Endothelial cell of umbilical vein (primary cell): ENCODE measurements at regions of chr16 and their contacts with region 1.

Region 1: DNA sequence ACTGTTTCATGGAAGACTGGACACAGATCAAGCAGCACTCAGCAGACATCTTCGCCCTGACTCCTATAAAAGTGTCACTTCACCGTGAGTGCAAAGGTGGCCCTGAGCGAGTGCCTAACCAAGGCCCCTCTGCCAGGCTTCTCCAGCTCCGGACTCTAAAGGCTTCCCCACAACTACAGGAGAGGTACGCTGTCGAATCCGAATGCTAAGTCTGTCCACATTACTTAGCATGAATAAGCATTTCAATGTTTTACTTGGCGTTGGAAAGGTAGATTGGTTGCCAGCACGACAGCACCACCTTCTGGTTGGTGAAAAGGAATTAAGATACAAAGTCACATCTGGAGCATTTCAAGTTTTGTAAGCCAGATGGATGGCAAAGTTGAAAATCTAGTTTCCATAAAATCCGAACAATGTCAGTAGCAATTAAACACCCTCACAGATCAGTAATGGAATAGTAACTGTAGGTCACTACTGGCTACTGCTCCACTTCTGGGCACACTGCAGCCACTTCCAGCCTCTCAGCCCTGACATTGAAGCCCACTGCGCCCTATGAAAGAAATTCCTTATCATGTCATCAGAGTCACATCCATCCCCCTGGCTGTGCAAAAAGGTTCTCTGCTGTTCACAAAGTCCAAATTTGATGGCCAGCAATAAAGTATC is 100.9 kb downstream of the PARN start:
- DNase-seq: peak; percentile 89
- H3K4me3 ChIP-seq: no peak overlapping the region
- H3K27ac ChIP-seq: no peak overlapping the region
- H3K4me1 ChIP-seq: peaks cover 3% of the 10 kb centered on the region
- H3K27me3 ChIP-seq: no peaks in the 10 kb centered on the region
- CTCF ChIP-seq: peak; percentile 56 to 71
- POLR2A ChIP-seq: no peak

Region 2: GRCh38 chr16:14300705-14301168 is 228.4 kb before region 1 on chr16:
- CTCF ChIA-PET with region 1: interaction called, 33 read pairs
- POLR2A ChIA-PET with region 1: no interaction called
- dilution Hi-C with region 1: no loop called
- intact Hi-C with region 1: loop called (anchors 1 kb)
- DNase-seq: peak; percentile 78
- H3K4me3 ChIP-seq: no peak overlapping the region
- H3K27ac ChIP-seq: no peak overlapping the region
- H3K4me1 ChIP-seq: peaks cover 10% of the 10 kb centered on the region
- H3K27me3 ChIP-seq: no peaks in the 10 kb centered on the region
- CTCF ChIP-seq: peak; percentile 43 to 70
- POLR2A ChIP-seq: no peak

Region 3: GRCh38 chr16:14399378-14400284 is 129.5 kb before region 1 on chr16:
- CTCF ChIA-PET with region 1: no interaction called
- POLR2A ChIA-PET with region 1: no interaction called
- dilution Hi-C with region 1: no loop called
- intact Hi-C with region 1: loop called (anchors 1 kb)
- DNase-seq: peak; percentile 34
- H3K4me3 ChIP-seq: no peak overlapping the region
- H3K27ac ChIP-seq: peak overlapping the region; percentile 38
- H3K4me1 ChIP-seq: peaks cover 11% of the 10 kb centered on the region
- H3K27me3 ChIP-seq: no peaks in the 10 kb centered on the region
- CTCF ChIP-seq: no peak
- POLR2A ChIP-seq: no peak

Region 4: DNA sequence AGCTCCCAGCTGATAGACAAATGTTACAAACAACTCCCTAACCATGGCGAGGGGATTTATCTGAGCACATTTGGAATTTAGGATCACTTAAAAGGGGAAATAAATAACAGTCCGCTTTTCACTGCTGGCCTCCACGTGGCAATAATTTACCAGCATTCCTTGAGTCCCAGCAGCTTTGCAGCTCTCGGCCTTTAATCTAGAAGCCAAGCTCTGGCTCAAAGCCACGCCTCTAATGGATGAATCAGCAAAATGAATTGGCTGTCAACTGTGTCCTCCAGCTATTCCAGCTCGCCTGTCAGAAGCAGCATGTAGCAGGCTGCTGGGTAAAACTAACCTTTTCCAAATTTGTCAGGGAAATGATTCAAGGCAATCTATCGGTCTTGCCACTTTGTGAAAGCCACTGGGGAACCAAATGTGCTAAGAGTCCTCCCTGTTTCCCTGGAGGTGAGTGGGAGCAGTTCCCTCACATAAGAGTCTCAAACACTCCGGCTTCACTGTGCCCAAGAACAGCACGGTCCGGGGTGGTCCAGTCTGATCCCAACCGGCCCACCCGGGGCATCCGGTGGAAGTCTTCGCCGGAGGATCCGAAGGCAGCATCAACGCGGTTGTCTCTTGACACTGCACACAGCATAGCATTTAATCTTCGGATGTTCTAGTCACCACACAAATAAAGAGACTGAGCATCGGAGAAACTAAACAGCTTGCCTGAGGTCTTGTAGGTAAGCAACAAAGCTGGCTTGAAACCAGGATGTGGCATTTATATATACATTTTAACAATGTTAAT is 42.4 kb before region 1 on chr16:
- CTCF ChIA-PET with region 1: no interaction called
- POLR2A ChIA-PET with region 1: no interaction called
- dilution Hi-C with region 1: no loop called
- intact Hi-C with region 1: loop called (anchors 2 kb)
- DNase-seq: peak; percentile 91
- H3K4me3 ChIP-seq: peak overlapping the region in 2 of 3 experiments; percentile 9 to 13
- H3K27ac ChIP-seq: peak overlapping the region; percentile 55
- H3K4me1 ChIP-seq: peaks cover 28% of the 10 kb centered on the region
- H3K27me3 ChIP-seq: no peaks in the 10 kb centered on the region
- CTCF ChIP-seq: no peak
- POLR2A ChIP-seq: no peak

Region 5: DNA sequence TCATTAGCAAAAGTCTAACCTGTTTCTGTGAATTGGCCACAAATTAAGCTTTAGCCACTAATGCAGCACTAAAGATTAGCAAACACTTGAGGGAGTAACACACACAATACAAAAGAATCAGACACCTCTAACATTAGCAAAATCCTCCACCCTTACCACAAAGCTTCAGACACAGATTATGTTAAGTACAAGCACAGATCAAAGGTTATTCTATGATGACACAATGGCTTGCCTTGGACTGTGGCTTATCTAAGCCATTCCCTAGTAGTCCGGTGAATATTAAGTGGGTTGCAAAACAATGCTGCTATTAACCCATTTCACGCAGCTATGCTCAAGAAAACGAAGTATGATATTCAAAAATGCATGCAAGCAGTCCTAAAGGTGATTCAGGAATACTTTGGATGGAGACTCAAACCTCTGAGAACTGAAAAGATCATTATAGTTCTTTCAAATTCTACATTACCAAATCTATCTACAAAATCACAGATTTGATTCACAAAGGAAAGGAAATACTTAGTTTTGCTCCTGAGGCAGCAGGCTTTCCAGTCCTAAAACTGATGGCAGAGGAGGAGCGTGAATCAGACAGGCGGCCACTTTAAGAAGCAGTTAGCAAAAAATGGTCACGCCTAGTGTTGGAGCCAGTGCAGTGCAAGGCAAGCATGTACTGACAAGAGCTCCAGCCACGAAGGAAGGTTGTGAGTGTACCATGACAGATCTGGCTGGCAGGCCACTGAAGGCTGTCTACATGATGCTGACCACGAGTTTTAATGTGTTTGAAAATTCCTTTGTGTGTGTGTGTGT is 33.8 kb after region 1 on chr16:
- CTCF ChIA-PET with region 1: no interaction called
- POLR2A ChIA-PET with region 1: no interaction called
- dilution Hi-C with region 1: no loop called
- intact Hi-C with region 1: no loop called
- DNase-seq: no peak
- H3K4me3 ChIP-seq: no peak overlapping the region
- H3K27ac ChIP-seq: no peak overlapping the region
- H3K4me1 ChIP-seq: peaks cover 17% of the 10 kb centered on the region
- H3K27me3 ChIP-seq: no peaks in the 10 kb centered on the region
- CTCF ChIP-seq: no peak
- POLR2A ChIP-seq: no peak